ENCODE measurements at regions of chr19 and their contacts with region 1.

Region 1: GRCh38 chr19:12847159-12848139 is 9.1 kb downstream of the MAST1 start:
- DNase-seq: peak; percentile 98
- ATAC-seq: peak; percentile 98
- H3K4me3 Mint-ChIP-seq: peak overlapping the region; percentile 58
- H3K27ac Mint-ChIP-seq: 0 out of 2 replicates have a peak overlapping the region, but pooled peaks have one; percentile 45
- H3K4me1 Mint-ChIP-seq: peaks cover 7% of the 10 kb centered on the region
- H3K27me3 Mint-ChIP-seq: peaks cover 21% of the 10 kb centered on the region
- CTCF ChIP-seq: peak; percentile 99

Region 2: GRCh38 chr19:12777217-12778016 is 70.0 kb before region 1 on chr19:
- CTCF ChIA-PET with region 1: interaction called, 69 read pairs
- POLR2A ChIA-PET with region 1: no interaction called
- DNase-seq: peak; percentile 91
- ATAC-seq: peak; percentile 39
- H3K4me3 Mint-ChIP-seq: peak overlapping the region; percentile 79
- H3K27ac Mint-ChIP-seq: peak overlapping the region; percentile 49
- H3K4me1 Mint-ChIP-seq: peaks cover 21% of the 10 kb centered on the region
- H3K27me3 Mint-ChIP-seq: no peaks in the 10 kb centered on the region; the same call in 1 of the 2 replicates
- CTCF ChIP-seq: peak; percentile 74

Region 3: GRCh38 chr19:12806239-12807081 is 41.0 kb before region 1 on chr19 and contains the start of gene RNASEH2A:
- CTCF ChIA-PET with region 1: interaction called, 15 read pairs
- POLR2A ChIA-PET with region 1: no interaction called
- DNase-seq: peak; percentile 91
- ATAC-seq: peak; percentile 89
- H3K4me3 Mint-ChIP-seq: peak within 1 kb of the TSS; percentile 96
- H3K27ac Mint-ChIP-seq: peak within 1 kb of the TSS; percentile 93
- H3K4me1 Mint-ChIP-seq: peaks cover 18% of the 10 kb centered on the region
- H3K27me3 Mint-ChIP-seq: peaks cover 4% of the 10 kb centered on the region; the same call in 1 of the 2 replicates
- CTCF ChIP-seq: no peak
- total RNA-seq, gene RNASEH2A: 71.3 to 78.2 TPM (median 72.9 TPM) in 3 replicates

Region 4: DNA sequence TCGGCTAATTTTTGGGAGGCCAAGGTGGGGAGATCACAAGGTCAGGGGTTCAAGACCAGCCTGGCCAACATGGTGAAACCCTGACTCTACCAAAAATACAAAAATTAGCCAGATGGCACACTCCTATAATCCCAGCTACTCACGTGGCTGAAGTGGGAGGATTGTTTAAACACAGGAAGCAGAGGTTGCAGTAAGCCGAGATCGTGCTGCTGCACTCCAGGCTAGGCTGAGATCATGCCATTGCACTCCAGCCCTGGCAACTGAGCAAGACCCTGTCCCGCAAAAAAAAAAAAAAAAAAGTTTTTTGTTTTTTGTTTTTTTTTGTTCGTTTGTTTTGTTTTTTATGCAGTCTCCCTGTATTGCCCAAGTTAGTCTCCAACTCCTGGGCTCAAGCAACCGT is 12.1 kb after region 1 on chr19:
- CTCF ChIA-PET with region 1: interaction called, 39 read pairs
- POLR2A ChIA-PET with region 1: no interaction called
- DNase-seq: no peak
- ATAC-seq: no peak
- H3K4me3 Mint-ChIP-seq: no peak overlapping the region
- H3K27ac Mint-ChIP-seq: no peak overlapping the region
- H3K4me1 Mint-ChIP-seq: peaks cover 2% of the 10 kb centered on the region; the same call in 1 of the 2 replicates
- H3K27me3 Mint-ChIP-seq: peaks cover 5% of the 10 kb centered on the region; the same call in 1 of the 2 replicates
- CTCF ChIP-seq: no peak

Region 5: DNA sequence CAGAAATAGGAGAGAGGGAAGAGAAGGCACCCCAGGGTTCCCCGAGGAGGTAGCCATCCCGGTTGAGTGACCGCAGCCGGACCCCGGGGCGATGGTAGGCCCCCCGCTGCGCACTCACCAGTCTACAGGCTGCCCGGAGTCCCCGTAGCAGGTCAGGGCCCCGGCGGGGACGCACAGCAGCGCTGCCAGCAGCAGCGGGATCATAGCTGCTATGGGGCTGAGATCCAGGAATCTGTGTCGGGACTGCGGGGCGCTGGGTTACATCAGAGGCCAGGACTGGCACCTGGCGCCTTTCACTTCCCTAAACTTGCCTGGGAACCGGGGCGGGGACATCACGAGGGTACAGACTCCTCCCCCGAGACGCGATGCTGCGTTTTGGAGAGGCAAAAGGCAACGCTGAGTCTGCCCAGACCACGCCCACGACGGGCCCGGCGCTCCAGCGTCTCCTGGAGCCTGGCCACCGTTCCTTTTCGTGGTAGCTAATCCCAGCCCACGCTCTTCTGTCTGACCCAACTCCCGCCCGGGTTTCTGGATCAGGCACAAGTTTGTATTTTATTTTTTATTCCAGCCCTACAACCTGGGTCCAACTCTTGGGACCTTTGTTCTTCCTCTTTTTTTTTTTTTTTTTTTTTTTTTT is 33.8 kb after region 1 on chr19 and contains the start of gene DNASE2:
- CTCF ChIA-PET with region 1: interaction called, 40 read pairs
- POLR2A ChIA-PET with region 1: interaction called, 4 read pairs
- DNase-seq: peak; percentile 97
- ATAC-seq: peak; percentile 66
- H3K4me3 Mint-ChIP-seq: peak within 1 kb of the TSS; percentile 90
- H3K27ac Mint-ChIP-seq: peak within 1 kb of the TSS; percentile 94
- H3K4me1 Mint-ChIP-seq: peaks cover 8% of the 10 kb centered on the region
- H3K27me3 Mint-ChIP-seq: peaks cover 30% of the 10 kb centered on the region
- CTCF ChIP-seq: no peak
- total RNA-seq, gene DNASE2: 31.7 to 35.7 TPM (median 33.4 TPM) in 3 replicates

Region 6: DNA sequence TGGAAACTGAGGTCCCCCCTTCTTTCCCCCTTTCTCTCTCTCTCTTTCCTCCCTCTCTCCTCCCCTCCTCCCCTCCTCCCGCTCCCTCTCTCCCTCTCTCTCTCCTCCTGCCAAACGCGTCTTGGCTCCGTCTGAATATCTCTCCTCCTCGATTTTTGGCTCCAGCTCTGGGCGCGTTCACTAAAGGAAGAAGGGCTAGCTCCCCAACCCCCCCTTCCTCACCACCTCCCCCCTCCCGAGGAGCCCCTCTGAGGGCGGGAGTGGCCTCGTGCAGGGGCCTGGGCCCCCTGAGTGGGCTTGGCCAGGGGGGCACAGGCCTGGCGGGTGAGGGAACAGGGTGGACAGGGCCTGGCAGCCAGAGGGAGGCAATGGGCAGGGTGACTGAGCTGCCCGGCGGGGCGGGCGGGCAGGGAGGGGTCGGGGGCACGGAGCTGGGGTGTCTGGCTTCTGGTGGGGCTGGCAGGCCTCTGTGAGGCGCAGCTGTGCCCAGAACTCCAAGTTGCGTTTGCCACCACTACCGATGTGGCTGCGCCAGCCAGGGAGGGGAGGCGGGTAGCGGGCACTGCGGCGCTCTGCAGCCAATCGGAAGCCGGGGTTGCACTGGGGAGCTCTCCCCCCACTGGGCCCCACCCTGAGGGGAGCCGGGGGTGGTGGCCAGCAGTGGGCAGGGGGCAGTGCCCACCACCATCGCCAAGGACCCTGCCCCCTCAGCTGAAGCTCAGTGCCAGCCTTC is 154.9 kb after region 1 on chr19:
- CTCF ChIA-PET with region 1: no interaction called
- POLR2A ChIA-PET with region 1: no interaction called
- DNase-seq: no peak
- ATAC-seq: no peak
- H3K4me3 Mint-ChIP-seq: no peak overlapping the region
- H3K27ac Mint-ChIP-seq: no peak overlapping the region
- H3K4me1 Mint-ChIP-seq: no peaks in the 10 kb centered on the region
- H3K27me3 Mint-ChIP-seq: peaks cover 88% of the 10 kb centered on the region
- CTCF ChIP-seq: no peak

Measured in WTC11 (cell line).